ENCODE measurements at regions of chr7 and their contacts with region 1.

Region 1: DNA sequence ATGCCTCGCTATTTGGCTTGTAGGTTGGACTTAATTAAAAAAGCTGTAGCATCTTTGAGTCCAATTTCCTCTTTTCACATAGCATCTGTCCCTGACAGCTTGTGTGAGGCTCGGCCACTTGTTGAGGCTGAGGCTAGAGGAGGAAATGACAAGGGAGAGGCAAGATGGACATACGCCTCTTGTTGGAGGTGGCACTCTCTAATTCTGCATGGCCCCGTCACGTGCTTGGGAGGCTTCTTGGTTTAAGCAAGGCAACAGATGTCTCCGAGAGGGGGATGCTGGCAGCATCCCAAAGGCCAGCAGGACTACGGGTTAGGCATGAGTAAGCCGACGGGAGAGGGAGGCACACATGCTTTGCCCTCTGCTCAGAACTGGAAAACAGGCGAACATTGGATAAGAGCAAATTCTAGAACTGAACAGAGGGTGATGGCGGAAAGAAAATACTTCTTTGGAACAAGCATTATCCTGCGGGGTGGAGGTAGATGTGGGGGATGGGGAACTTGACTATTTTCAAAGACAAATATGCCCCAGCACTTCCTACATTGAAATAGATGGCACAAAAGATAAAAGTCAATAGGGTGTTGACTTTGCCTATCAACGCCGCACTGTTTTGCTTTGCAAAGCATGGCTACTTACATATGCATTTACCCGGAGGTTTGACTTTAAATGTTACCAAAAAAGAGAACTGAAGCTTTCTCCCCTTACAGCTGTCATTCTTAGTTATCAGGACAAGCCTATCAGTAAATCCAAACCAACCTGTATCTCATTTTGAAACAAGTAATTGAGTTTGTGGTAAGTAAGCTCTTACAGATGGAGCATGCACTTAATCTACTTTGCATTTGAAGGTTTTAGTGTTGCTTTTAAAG is 94.8 kb downstream of the CHN2 start:
- DNase-seq: no peak
- ATAC-seq: peak in 1 of 4 experiments; percentile 23
- H3K4me3 ChIP-seq: no peak overlapping the region
- H3K4me3 Mint-ChIP-seq: no peak overlapping the region
- H3K27ac ChIP-seq: no peak overlapping the region
- H3K27ac Mint-ChIP-seq: no peak overlapping the region
- H3K4me1 ChIP-seq: peaks cover 6 to 16% of the 10 kb centered on the region in 2 experiments
- H3K4me1 Mint-ChIP-seq: peaks cover 12 to 21% (median 18%) of the 10 kb centered on the region in 3 donors
- H3K27me3 ChIP-seq: peaks cover 0 to 4% of the 10 kb centered on the region in 2 experiments
- H3K27me3 Mint-ChIP-seq: no peaks in the 10 kb centered on the region

Region 2: DNA sequence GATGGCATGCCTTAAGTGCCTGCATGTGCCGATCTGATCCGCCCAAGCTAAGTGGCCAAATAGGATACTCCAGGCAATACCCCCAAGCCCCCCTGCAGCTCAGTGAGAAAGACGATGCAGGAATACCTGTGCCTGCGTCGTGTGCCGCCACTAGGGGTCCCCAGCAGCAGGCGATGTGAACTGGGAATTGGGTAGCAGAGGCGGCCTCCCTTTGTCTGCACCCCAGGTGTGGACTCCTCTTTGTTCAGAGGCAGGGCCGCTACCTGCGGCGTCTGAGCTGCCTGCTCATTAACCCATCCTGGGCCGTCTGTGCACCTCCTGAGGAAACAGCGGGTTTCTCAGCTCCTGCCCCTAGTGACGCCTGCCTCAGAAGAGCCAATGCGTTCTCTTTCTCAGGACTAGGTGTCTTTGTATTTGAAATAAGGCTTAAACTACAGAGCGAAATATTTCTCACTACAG is 99.6 kb before region 1 on chr7:
- CTCF ChIA-PET with region 1: interaction called in 1 of 2 experiments, 13 read pairs
- POLR2A ChIA-PET with region 1: no interaction called
- DNase-seq: peak in 32 of 35 experiments; percentile 20 to 74 (median 42)
- ATAC-seq: peak; percentile 51 to 69 (median 62)
- H3K4me3 ChIP-seq: no peak overlapping the region
- H3K4me3 Mint-ChIP-seq: no peak overlapping the region
- H3K27ac ChIP-seq: no peak overlapping the region
- H3K27ac Mint-ChIP-seq: no peak overlapping the region
- H3K4me1 ChIP-seq: peaks cover 0 to 9% of the 10 kb centered on the region in 2 experiments
- H3K4me1 Mint-ChIP-seq: peaks cover 0 to 5% (median 0%) of the 10 kb centered on the region in 3 donors
- H3K27me3 ChIP-seq: peaks cover 0 to 12% of the 10 kb centered on the region in 2 experiments
- H3K27me3 Mint-ChIP-seq: peaks cover 12 to 23% of the 10 kb centered on the region in 2 donors

Region 3: DNA sequence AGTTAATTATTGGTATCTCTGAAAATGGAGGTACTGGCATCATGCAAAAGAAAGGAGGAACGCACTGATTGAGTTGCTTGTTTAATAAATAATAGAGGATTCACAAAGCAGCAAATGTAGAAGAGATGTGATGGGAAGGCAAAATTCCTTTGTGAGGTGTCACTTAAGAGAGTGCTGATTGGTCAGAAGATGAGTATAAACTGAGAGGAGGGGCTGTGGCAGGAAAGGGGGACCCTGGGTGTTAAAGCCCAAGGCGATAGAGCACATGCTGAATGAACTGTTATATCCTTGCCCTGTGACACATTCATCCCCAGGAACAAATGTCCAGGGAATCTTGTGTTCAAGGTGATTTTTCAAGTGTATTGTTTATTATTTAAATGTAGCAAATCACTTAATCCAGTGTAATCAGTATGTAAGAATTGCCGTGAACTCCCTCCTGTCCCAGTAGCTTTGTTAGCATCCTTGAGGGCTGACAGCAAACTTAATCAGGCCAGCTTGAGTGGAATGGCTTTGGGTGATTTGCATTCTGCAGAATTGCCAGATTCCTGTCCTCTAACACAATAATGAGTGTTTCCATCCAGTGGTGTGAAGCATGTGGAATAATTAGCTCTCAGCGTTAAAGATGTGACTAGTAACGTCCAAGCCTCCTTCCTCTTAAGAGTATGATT is 17.1 kb after region 1 on chr7:
- CTCF ChIA-PET with region 1: no interaction called
- POLR2A ChIA-PET with region 1: no interaction called
- DNase-seq: no peak
- ATAC-seq: no peak
- H3K4me3 ChIP-seq: no peak overlapping the region
- H3K4me3 Mint-ChIP-seq: no peak overlapping the region
- H3K27ac ChIP-seq: no peak overlapping the region
- H3K27ac Mint-ChIP-seq: no peak overlapping the region
- H3K4me1 ChIP-seq: no peaks in the 10 kb centered on the region
- H3K4me1 Mint-ChIP-seq: no peaks in the 10 kb centered on the region
- H3K27me3 ChIP-seq: peaks cover 0 to 4% of the 10 kb centered on the region in 2 experiments
- H3K27me3 Mint-ChIP-seq: no peaks in the 10 kb centered on the region

Region 4: GRCh38 chr7:29318853-29319718 is 29.7 kb after region 1 on chr7:
- CTCF ChIA-PET with region 1: interaction called in 1 of 2 experiments, 6 read pairs
- POLR2A ChIA-PET with region 1: interaction called in 1 of 2 experiments, 13 read pairs
- DNase-seq: no peak
- ATAC-seq: no peak
- H3K4me3 ChIP-seq: no peak overlapping the region
- H3K4me3 Mint-ChIP-seq: no peak overlapping the region
- H3K27ac ChIP-seq: no peak overlapping the region
- H3K27ac Mint-ChIP-seq: no peak overlapping the region
- H3K4me1 ChIP-seq: no peaks in the 10 kb centered on the region
- H3K4me1 Mint-ChIP-seq: no peaks in the 10 kb centered on the region
- H3K27me3 ChIP-seq: no peaks in the 10 kb centered on the region
- H3K27me3 Mint-ChIP-seq: no peaks in the 10 kb centered on the region